ENCODE measurements at regions of chr1 and their contacts with region 1.

Region 1: GRCh38 chr1:174262349-174263241 is 103.3 kb downstream of the RABGAP1L start:
- DNase-seq: no peak
- ATAC-seq: no peak
- H3K4me3 Mint-ChIP-seq: no peak overlapping the region
- H3K27ac Mint-ChIP-seq: no peak overlapping the region
- H3K4me1 Mint-ChIP-seq: no peaks in the 10 kb centered on the region
- H3K27me3 Mint-ChIP-seq: no peaks in the 10 kb centered on the region

Region 2: DNA sequence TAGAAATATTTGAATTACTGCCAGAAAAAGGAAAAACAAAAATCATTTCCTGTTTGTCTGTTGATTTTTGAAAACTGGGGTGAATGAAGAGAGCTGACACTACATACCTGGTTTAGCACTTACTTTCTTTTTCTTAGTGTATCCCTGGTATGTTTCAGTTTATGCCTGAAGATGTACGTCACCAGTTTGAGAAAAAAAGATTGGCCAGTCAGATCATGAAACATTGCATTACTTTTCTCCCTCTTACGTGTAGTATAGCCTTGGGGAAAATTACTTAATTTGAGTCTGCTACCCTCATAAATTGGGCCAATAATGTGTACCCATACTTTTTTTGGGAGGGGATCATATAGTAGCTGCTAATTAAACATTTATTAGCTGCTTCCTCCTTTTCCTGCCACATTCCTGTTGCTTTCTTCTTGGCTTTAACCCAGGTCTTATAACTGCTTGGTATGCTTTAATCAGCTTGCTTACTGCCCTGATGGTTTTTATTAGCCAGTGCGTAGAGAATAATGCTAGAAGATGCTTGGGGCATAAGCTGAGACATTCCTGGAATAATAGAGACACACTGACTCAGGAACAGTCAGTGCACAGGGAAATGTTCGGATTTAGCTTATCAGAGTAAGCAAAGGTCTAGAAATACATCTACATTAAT is 71.2 kb before region 1 on chr1:
- CTCF ChIA-PET with region 1: no interaction called
- POLR2A ChIA-PET with region 1: no interaction called
- intact Hi-C with region 1: no loop called
- DNase-seq: no peak
- ATAC-seq: peak; percentile 53
- H3K4me3 Mint-ChIP-seq: no peak overlapping the region
- H3K27ac Mint-ChIP-seq: no peak overlapping the region
- H3K4me1 Mint-ChIP-seq: peaks cover 30% of the 10 kb centered on the region
- H3K27me3 Mint-ChIP-seq: no peaks in the 10 kb centered on the region

Region 3: DNA sequence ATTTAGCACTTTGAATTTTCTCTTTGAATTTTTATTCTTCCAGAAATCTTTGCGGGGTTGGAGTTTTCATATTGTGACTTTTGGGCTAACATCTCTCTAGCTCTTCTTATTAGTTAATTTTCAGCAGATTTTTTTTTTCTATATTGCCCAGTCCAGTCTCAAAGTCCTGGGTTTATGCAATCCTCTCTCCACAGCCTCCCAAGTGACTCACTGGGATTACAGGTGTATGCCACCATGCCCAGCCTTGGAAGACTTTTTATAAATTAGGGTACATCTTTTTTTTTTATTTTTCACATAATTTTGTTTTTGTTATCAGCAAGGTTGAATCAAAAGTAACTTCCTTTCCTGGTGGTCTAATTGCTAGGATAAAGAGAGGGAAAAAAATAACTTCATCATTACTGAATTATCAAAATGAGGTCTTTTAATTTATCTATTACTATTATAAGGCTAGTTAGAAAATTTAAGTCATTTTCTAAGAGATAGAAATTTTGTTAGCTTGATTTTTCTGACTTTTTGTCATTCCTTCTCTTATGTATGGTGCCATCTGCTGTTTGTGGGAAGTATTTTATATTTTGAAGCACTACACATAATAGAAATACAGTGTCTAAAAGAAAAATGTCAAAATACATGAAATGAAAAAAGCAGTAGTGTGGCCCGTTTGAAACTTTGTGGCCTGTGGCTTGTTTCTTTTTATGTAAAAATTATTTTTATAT is 463.7 kb after region 1 on chr1:
- CTCF ChIA-PET with region 1: interaction called, 30 read pairs
- POLR2A ChIA-PET with region 1: no interaction called
- intact Hi-C with region 1: loop called (anchors 1 to 2 kb)
- DNase-seq: no peak
- ATAC-seq: no peak
- H3K4me3 Mint-ChIP-seq: no peak overlapping the region
- H3K27ac Mint-ChIP-seq: no peak overlapping the region
- H3K4me1 Mint-ChIP-seq: no peaks in the 10 kb centered on the region
- H3K27me3 Mint-ChIP-seq: no peaks in the 10 kb centered on the region

Region 4: DNA sequence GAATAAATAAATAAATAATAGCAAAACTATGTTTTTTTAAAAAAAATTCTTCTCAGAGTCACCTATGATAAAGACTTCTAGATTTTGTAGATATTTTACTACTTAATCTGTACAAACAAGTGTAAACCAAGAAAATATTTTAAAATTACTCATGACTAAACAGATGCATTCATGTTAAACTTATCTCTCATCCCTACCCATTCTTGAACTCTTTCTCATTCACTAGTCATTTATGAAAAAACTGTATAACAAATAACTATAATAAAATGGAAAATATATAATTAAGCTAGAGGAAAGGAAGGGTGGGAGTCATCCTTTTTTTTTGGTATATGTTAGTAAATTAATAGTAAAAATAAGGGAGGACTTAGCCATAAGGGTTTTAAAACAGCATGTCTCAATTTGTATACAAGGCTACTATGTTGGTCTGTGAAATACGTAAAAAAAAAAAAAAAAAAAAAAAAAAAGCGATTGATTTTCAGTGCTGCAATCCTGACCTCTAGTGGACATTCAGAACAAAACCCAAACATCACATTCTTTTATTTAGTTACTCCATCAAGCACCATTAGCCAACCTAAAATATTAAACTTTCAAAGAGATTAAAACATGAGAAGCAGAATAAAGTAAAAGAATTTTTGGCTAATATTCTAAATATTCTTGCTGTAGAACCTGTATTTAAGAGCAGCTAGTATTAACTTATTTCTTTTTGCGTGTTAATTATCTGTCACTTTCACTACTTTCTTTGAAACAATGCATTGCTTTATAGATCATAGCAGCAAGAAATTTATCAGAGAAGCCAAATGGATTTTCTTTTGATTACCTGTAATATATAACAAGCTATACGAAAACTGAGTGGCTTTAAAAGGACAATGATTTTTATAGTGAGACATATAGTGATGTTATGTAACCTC is 481.3 kb after region 1 on chr1:
- CTCF ChIA-PET with region 1: interaction called, 22 read pairs
- POLR2A ChIA-PET with region 1: no interaction called
- intact Hi-C with region 1: loop called (anchors 1 kb)
- DNase-seq: no peak
- ATAC-seq: no peak
- H3K4me3 Mint-ChIP-seq: no peak overlapping the region
- H3K27ac Mint-ChIP-seq: no peak overlapping the region
- H3K4me1 Mint-ChIP-seq: peaks cover 3% of the 10 kb centered on the region
- H3K27me3 Mint-ChIP-seq: no peaks in the 10 kb centered on the region

Region 5: DNA sequence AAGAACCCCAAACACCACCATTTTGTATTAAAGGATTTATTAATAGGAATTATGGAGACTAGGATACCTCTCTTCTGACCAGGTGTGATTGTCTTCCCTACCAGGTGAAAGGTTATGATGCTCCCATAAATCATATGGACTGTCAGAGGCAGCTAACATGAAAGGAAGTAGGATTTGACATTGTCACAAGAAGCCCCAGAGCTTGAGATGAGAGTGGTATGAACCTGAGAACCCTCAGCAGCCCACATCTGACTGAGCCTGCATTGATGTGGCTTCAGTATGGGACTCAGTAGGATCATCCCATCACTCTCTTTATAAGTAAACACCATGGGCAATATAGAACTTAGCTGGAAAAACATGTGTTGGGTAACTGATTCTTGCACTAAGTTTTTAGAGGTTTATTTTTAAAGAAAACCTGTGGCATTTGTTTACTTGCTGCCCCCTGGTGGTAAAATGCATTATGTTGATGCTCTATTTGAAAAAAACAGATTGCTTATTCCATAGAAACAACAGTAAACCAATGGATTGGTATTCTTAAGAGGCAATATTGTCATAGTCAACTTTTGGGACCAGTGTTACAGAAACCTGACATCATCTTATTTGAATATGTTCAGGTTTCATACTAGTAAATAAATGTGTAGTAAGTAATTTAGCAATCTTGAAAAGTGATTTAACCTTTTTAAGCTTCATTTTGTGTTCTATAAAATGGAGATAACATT is 720.5 kb after region 1 on chr1:
- CTCF ChIA-PET with region 1: interaction called, 3 read pairs
- POLR2A ChIA-PET with region 1: no interaction called
- intact Hi-C with region 1: loop called in 1 of 2 experiments (anchors 5 kb)
- DNase-seq: peak; percentile 44
- ATAC-seq: peak; percentile 39
- H3K4me3 Mint-ChIP-seq: no peak overlapping the region
- H3K27ac Mint-ChIP-seq: no peak overlapping the region
- H3K4me1 Mint-ChIP-seq: peaks cover 19% of the 10 kb centered on the region
- H3K27me3 Mint-ChIP-seq: no peaks in the 10 kb centered on the region

Region 6: GRCh38 chr1:175129997-175130648 is 867.5 kb after region 1 on chr1:
- CTCF ChIA-PET with region 1: no interaction called
- POLR2A ChIA-PET with region 1: no interaction called
- intact Hi-C with region 1: loop called in 1 of 2 experiments (anchors 5 kb)
- DNase-seq: no peak
- ATAC-seq: no peak
- H3K4me3 Mint-ChIP-seq: no peak overlapping the region
- H3K27ac Mint-ChIP-seq: no peak overlapping the region
- H3K4me1 Mint-ChIP-seq: no peaks in the 10 kb centered on the region
- H3K27me3 Mint-ChIP-seq: peaks cover 5% of the 10 kb centered on the region

Measured in activated CD4-positive, alpha-beta T cell treated with anti-CD3 and anti-CD28 coated beads for 36 hours (primary cell).